ENCODE measurements at regions of chr20 and their contacts with region 1.

Region 1: DNA sequence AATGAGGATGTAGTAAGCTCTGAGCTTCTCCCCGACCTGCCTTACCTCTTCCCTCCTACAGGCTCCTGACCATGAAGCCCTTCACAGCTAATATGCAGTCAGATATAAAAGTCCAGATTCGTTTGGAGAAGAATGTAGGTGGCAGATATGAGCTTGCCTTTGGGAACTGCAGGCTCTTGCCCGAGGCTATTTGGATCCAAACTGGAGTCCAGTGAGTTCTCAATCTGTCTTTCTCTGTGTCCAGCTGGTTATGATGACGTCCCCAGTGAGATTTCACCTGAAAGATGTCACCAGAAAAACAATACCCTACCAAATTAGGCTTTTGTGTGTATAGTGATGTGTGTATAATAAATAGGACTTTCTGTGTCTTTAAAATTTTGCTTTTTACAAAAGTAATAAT is 14.7 kb upstream of the BPIFA3 start:
- DNase-seq: no peak
- H3K4me3 ChIP-seq: no peak overlapping the region
- H3K27ac ChIP-seq: no peak overlapping the region
- H3K4me1 ChIP-seq: no peaks in the 10 kb centered on the region
- H3K27me3 ChIP-seq: no peaks in the 10 kb centered on the region
- CTCF ChIP-seq: no peak

Region 2: DNA sequence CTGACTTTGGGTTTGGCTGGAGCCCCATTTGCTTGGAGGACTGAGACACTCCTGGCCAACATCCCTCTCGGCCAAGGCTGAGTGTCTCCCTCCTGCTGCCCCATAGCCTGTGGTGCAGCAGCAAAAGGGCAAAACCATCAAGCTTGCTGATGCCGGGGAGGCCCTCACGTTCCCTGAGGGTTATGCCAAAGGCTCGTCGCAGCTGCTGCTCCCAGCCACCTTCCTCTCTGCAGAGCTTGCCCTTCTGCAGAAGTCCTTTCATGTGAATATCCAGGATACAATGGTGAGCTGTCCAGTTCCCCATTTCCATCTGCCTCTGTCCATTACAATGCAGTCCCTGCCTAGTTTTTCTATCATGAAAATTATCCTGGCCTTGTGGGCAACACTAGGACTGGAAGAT is 165.0 kb before region 1 on chr20:
- intact Hi-C with region 1: no loop called
- DNase-seq: no peak
- H3K4me3 ChIP-seq: no peak overlapping the region
- H3K27ac ChIP-seq: no peak overlapping the region
- H3K4me1 ChIP-seq: no peaks in the 10 kb centered on the region
- H3K27me3 ChIP-seq: no peaks in the 10 kb centered on the region
- CTCF ChIP-seq: no peak

Region 3: DNA sequence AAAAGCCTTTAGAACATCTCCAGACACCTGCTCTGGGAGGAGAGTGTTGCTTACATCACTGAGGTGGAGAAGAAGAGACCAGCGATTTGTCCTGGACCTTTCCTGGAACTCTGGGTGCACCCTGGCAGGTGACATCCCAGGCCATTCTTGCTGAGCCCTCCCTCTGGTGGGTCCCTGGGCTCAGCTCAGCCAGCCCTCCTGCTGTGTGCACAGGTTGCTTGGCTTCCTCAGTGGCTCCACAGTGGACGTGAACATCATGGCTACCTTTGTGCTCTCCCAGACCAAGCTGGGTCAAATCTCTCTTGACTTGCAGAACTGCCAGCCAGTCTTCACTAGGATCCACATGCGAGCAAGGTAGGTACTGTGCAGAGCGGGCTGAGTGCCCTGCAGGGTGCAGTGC is 54.4 kb before region 1 on chr20:
- intact Hi-C with region 1: loop called (anchors 5 kb)
- DNase-seq: no peak
- H3K4me3 ChIP-seq: no peak overlapping the region
- H3K27ac ChIP-seq: no peak overlapping the region
- H3K4me1 ChIP-seq: no peaks in the 10 kb centered on the region
- H3K27me3 ChIP-seq: no peaks in the 10 kb centered on the region
- CTCF ChIP-seq: no peak

Measured in ascending aorta (tissue), 2 donors.